ENCODE measurements at regions of chr18 and their contacts with region 1.

Region 1: GRCh38 chr18:11733031-11733430 is 44.0 kb downstream of the GNAL start:
- DNase-seq: peak; percentile 48
- ATAC-seq: peak; percentile 98
- H3K4me3 ChIP-seq: peak overlapping the region; percentile 23 to 45
- H3K27ac ChIP-seq: no peak overlapping the region
- H3K4me1 ChIP-seq: peaks cover 2 to 4% of the 10 kb centered on the region in 2 experiments; a peak in 2 of 4 replicates
- H3K27me3 ChIP-seq: peaks cover 17% of the 10 kb centered on the region
- CTCF ChIP-seq: peak; percentile 80 to 97 (median 90)
- POLR2A ChIP-seq: no peak
- RAD21 ChIP-seq: peak; percentile 91

Region 2: DNA sequence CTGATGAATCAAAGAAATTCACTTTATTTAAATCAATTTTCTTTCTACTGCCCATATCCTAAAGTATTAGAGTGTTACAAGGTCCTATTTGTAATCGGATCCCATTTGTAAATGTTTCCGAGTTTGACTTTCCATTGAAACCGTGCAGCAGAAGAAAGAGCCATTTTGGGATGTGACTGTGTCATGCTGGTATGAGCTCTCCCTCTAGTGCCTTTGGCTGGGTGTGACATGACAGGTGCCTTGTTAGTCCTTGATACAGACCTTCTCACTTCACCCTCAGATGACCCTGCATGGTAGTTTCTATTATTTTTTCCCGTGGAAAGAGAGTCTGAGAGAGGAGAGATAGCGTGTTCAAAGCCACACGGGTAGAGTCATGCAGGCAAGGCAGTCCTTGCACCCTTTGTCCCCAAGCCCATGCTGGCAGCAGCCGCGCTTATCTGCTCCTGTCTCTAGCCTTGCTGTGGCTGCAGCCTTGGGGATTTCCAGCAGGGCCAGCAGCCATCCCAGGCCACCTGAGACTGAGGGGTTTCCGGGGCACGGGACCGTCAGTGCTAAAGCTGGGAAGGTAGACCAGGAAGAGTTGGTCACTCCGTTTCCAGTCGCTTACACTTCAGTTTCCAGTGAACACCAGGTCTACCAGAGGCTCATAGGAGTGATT is 139.6 kb after region 1 on chr18:
- CTCF ChIA-PET with region 1: interaction called, 11 read pairs
- POLR2A ChIA-PET with region 1: no interaction called
- RAD21 ChIA-PET with region 1: interaction called in 1 of 2 experiments, 3 read pairs
- intact Hi-C with region 1: loop called (anchors 1 kb)
- DNase-seq: peak; percentile 36
- ATAC-seq: peak; percentile 94
- H3K4me3 ChIP-seq: no peak overlapping the region
- H3K27ac ChIP-seq: no peak overlapping the region
- H3K4me1 ChIP-seq: peaks cover 0 to 4% of the 10 kb centered on the region in 2 experiments; a peak in 1 of 4 replicates
- H3K27me3 ChIP-seq: no peaks in the 10 kb centered on the region
- CTCF ChIP-seq: peak; percentile 58 to 69 (median 62)
- POLR2A ChIP-seq: no peak
- RAD21 ChIP-seq: peak; percentile 88

Region 3: GRCh38 chr18:11995445-11996189 is 262.6 kb after region 1 on chr18:
- CTCF ChIA-PET with region 1: interaction called, 17 read pairs
- POLR2A ChIA-PET with region 1: no interaction called
- RAD21 ChIA-PET with region 1: interaction called in 1 of 2 experiments, 4 read pairs
- intact Hi-C with region 1: loop called (anchors 1 kb)
- DNase-seq: peak; percentile 41
- ATAC-seq: peak; percentile 96
- H3K4me3 ChIP-seq: no peak overlapping the region
- H3K27ac ChIP-seq: no peak overlapping the region
- H3K4me1 ChIP-seq: peaks cover 6 to 19% of the 10 kb centered on the region in 2 experiments; a peak in 3 of 4 replicates
- H3K27me3 ChIP-seq: no peaks in the 10 kb centered on the region
- CTCF ChIP-seq: peak; percentile 73 to 89 (median 88)
- POLR2A ChIP-seq: no peak
- RAD21 ChIP-seq: peak; percentile 91

Region 4: DNA sequence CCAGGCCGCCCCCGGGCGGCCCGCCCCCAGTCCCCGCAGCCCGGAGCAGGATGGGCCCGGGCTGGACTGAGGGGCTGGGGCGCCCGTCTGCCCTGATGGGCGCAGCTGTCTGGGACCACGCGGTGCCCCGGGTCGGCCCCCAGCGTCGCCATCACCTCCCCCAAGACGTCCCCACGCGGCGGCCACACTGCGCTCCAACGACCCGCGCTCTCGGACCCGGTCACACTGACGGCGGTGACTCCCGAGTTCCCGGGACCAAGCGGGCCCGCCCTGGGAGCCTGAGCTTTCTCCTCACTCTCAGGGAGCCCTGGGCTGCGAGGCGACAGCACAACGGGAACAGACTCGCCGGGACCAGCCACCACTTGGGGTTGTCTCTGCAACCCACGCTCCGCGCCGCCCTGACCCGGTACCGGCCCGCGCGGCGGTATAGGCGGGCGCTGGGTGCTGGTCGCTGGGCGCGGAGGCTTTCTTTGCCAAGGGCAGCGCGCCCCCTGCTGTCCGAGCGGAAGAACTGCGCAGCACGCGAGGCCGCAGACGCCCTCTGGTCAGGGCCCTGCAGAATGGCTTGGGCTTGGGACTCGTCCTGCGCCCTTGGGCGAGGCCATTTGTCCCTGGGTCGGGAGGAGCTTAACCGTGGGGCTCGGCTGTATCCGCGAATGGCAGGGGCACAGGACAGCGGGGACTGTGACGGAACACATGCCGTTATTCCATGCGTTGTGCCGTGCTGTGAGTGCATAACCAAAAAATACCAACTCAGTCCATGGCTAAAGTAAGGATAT is 305.8 kb after region 1 on chr18:
- CTCF ChIA-PET with region 1: interaction called, 16 read pairs
- POLR2A ChIA-PET with region 1: no interaction called
- RAD21 ChIA-PET with region 1: interaction called in 1 of 2 experiments, 4 read pairs
- intact Hi-C with region 1: loop called (anchors 1 kb)
- DNase-seq: peak; percentile 78
- ATAC-seq: peak; percentile 100
- H3K4me3 ChIP-seq: peak overlapping the region; percentile 30 to 49
- H3K27ac ChIP-seq: no peak overlapping the region; the same call in 1 of the 2 replicates
- H3K4me1 ChIP-seq: peaks cover 0 to 12% of the 10 kb centered on the region in 2 experiments; a peak in 2 of 4 replicates
- H3K27me3 ChIP-seq: no peaks in the 10 kb centered on the region
- CTCF ChIP-seq: peak; percentile 87 to 94 (median 91)
- POLR2A ChIP-seq: no peak
- RAD21 ChIP-seq: peak; percentile 96

Measured in HCT116 (cell line).